Activated naive CD4-positive, alpha-beta T cell treated with anti-CD3 and anti-CD28 coated beads for 36 hours (primary cell): ENCODE measurements at regions of chr22 and their contacts with region 1.

Region 1: DNA sequence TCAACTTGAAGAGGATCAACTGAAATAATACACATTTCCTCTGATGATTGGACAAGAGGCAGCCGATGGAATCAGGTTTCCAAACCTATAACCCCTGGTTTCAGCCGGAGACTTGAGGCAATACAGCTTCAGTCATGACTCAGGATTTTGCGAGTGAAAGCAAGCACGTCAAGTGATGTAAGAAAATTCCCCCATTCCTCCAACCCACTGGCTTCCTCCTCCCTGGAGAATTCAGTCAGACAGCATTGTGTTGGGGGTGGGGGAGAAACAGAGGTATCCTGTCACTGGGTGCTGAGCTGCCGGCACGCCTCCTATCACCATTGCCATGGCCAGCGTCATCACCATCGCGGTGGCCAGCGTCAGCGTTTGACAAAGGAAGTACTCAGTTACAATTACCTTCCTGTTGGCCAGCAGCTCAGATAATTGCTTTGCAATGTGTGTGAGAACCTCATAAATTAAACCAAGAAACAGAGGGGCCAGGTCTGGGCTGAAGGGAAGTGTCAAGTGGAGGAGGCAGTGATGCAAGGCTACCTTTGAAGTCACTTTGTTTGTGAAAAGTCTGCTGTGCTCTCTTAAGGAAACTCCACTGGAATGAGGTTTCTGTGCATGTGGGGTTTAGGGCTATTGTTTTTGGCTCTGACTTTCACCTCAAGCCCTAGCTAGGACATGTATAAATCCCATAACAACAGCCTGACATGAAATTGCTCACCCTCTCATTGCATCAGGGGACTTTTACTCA is 50.2 kb downstream of the LIF start:
- DNase-seq: peak; percentile 84
- H3K4me3 Mint-ChIP-seq: peak overlapping the region; percentile 57
- H3K27ac Mint-ChIP-seq: peak overlapping the region; percentile 95
- H3K4me1 Mint-ChIP-seq: peaks cover 70% of the 10 kb centered on the region
- H3K27me3 Mint-ChIP-seq: no peaks in the 10 kb centered on the region

Region 2: DNA sequence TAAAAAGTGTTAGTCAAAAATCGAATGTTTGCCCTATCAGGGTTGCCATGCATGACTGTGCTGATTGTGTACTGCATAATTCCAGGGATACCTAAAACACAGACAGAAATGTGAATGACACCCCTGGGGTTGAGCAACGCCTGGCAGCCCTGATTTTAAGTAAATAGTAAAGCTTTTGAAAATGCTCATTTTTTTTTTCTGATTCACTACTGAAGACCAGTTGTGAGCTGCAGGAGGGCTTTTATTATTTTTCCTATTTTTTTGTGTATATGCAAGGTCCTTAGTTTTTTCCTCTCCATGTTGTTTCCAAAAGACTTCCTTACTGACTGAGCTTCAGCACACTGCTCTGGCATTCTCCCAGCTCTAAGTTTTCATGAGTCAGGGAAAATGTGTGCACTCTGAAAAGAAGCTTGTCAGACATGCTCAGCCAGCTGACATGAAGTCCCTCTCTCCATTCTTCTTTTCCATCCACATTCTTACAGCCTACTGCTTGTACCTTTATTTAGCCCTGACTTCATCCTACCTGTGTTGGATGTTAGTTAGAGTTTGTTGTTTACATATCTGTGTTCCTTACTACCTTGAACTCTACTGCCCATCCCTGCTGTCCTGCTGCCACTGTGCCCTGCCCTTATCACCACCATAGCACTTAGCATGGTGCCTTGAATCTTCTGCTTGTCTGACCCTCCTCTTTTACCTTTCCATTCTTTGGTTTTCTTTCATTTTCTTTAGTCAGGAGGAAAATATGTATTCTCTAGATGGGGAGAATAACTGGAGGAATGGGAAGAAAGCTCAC is 36.6 kb before region 1 on chr22:
- CTCF ChIA-PET with region 1: no interaction called
- intact Hi-C with region 1: loop called (anchors 2 kb)
- DNase-seq: no peak
- H3K4me3 Mint-ChIP-seq: no peak overlapping the region
- H3K27ac Mint-ChIP-seq: peak overlapping the region; percentile 93
- H3K4me1 Mint-ChIP-seq: peaks cover 63% of the 10 kb centered on the region
- H3K27me3 Mint-ChIP-seq: no peaks in the 10 kb centered on the region

Region 3: DNA sequence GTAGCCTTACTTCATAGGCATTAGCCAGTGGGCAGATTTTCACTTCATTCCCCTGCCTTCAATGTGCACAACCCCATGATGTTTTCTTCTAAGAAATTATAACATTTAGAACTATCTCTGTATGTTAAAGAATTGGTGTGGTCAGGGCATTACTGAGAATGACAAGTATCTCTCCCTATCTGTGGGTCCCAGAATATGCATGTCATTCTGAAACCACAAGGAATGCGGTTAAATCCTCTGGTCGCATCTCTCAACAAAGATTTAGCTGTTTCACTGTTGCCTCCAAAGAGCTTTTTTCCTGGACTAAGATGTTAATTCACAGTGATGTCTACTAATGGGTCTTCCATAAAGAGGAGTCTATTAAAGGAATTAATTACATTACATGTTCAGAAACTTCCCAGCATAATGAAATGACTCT is 12.4 kb before region 1 on chr22:
- CTCF ChIA-PET with region 1: interaction called, 9 read pairs
- intact Hi-C with region 1: loop called (anchors 1 kb)
- DNase-seq: no peak
- H3K4me3 Mint-ChIP-seq: no peak overlapping the region
- H3K27ac Mint-ChIP-seq: peak overlapping the region; percentile 93
- H3K4me1 Mint-ChIP-seq: peaks cover 87% of the 10 kb centered on the region
- H3K27me3 Mint-ChIP-seq: no peaks in the 10 kb centered on the region

Region 4: DNA sequence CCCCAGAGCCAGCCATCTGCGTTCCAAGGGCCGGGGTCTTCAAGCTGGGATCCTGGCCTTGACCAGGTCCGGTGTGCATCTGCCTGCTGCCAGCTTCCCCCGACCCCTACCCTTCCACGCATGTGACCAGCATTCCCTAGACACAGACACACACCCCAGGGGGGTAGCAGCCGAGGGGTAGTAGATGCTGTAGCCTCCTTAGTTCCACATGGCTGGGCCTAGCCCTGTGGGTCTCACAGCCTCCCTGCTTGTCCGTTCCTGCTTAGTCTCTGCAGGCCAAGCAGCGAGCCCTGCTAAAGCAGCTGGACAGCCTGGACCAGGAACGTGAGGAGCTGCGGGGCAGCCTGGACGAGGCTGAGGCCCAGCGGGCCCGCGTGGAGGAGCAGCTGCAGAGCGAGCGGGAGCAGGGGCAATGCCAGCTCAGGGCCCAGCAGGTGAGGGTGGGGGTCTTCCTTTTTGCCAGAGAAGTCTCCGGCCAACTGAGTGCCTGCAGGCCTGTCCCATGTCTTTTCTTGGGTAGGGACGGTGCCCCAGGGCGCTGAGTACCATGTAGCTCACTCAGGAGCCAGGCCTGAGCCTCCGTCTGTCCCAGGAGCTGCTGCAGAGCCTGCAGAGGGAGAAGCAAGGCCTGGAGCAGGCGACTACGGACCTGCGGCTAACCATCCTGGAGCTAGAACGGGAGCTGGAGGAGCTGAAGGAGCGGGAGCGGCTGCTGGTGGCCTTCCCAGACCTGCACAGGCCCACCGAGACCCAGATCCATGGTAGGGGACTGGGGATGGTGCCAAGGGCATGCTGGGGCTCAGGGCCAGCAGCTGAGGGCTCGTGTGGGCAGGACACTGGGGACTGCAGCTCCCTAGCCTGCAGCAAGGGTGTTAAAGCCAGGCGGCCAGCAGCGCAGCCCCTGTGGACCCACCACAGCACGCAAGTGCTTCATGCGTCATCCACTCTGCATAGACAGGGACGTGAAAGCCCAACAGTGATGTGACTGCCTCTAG is 177.3 kb after region 1 on chr22:
- CTCF ChIA-PET with region 1: no interaction called
- intact Hi-C with region 1: no loop called
- DNase-seq: no peak
- H3K4me3 Mint-ChIP-seq: no peak overlapping the region
- H3K27ac Mint-ChIP-seq: no peak overlapping the region
- H3K4me1 Mint-ChIP-seq: no peaks in the 10 kb centered on the region
- H3K27me3 Mint-ChIP-seq: no peaks in the 10 kb centered on the region